Common myeloid progenitor, CD34-positive (primary cell): ENCODE measurements at regions of chrX and their contacts with region 1.

Region 1: GRCh38 chrX:41259516-41259915 is 74.4 kb upstream of the DDX3X start:
- DNase-seq: no peak
- H3K4me3 ChIP-seq: no peak overlapping the region
- H3K27ac ChIP-seq: no peak overlapping the region
- H3K4me1 ChIP-seq: peaks cover 5 to 12% (median 9%) of the 10 kb centered on the region in 4 experiments
- H3K27me3 ChIP-seq: peaks cover 0 to 7% (median 0%) of the 10 kb centered on the region in 5 experiments

Region 2: DNA sequence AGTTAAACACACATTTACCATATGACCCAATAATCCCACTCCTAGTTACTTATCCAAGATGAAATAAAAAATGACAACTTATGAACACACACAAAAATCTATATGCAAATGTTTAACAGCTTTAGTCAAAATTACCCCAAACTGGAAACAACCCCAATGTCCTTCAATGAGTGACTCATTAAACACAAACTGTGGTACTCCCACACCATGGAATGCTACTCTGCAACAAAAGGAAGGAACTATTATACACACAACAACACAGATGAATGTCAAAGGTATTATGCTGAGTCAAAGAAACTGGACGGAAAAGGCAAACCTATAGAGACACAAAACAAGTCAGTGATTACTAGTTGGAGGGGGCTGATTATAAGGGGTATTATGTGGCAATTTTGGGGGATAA is 564.7 kb before region 1 on chrX:
- CTCF ChIA-PET with region 1: no interaction called
- POLR2A ChIA-PET with region 1: no interaction called
- DNase-seq: no peak
- H3K4me3 ChIP-seq: no peak overlapping the region
- H3K27ac ChIP-seq: no peak overlapping the region
- H3K4me1 ChIP-seq: no peaks in the 10 kb centered on the region
- H3K27me3 ChIP-seq: peaks cover 0 to 10% (median 0%) of the 10 kb centered on the region in 5 experiments

Region 3: DNA sequence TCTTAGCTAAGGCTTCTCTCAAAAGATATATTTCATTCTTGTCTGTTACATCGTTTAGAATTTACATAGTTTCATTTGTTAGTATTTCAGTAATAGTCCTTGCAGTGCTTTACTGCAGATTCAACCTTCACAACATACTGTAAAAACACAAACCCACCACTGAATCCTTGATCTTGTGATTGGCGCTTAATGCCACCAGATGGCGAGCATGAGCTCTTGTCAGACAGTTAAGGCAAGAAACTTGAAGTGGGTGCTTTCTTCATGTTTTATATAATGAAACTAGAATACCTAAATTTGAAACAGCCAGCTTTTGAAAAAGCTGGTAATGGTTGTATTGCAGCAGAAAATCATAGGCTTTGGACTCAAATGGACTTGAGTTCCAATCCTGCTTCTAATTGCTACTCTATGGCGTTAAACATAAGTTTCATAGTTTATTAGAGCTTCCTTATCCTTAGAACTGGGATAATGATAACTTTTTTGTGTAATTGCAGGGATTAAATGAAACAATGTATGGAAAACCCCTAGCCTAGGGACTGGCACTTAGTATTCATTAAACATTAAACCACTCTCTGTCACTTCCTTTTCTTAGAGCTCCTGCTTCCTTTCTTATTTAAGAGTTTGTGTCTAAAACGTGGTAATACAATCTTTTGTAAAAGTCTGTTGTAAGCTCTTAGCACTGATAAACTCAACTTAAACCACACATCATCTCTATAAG is 79.2 kb before region 1 on chrX:
- CTCF ChIA-PET with region 1: interaction called, 37 read pairs
- POLR2A ChIA-PET with region 1: no interaction called
- DNase-seq: peak; percentile 70 to 93 (median 92)
- H3K4me3 ChIP-seq: peak overlapping the region in 1 of 7 experiments; percentile 42
- H3K27ac ChIP-seq: peak overlapping the region; percentile 55 to 59
- H3K4me1 ChIP-seq: peaks cover 3 to 15% (median 7%) of the 10 kb centered on the region in 4 experiments
- H3K27me3 ChIP-seq: no peaks in the 10 kb centered on the region

Region 4: GRCh38 chrX:41236629-41237028 is 22.9 kb before region 1 on chrX:
- CTCF ChIA-PET with region 1: interaction called, 14 read pairs
- POLR2A ChIA-PET with region 1: no interaction called
- DNase-seq: peak in 2 of 3 donors; percentile 61 to 69
- H3K4me3 ChIP-seq: no peak overlapping the region
- H3K27ac ChIP-seq: peak overlapping the region in 1 of 2 experiments; percentile 29
- H3K4me1 ChIP-seq: peaks cover 10 to 37% (median 33%) of the 10 kb centered on the region in 4 experiments
- H3K27me3 ChIP-seq: no peaks in the 10 kb centered on the region